Mammary epithelial cell (primary cell): ENCODE measurements at regions of chr1 and their contacts with region 1.

Region 1: GRCh38 chr1:229440851-229441537 is 7.1 kb upstream of the ACTA1 start:
- DNase-seq: peak; percentile 78
- H3K4me3 ChIP-seq: no peak overlapping the region
- H3K27ac ChIP-seq: no peak overlapping the region
- H3K4me1 ChIP-seq: no peaks in the 10 kb centered on the region
- H3K27me3 ChIP-seq: no peaks in the 10 kb centered on the region
- CTCF ChIP-seq: no peak

Region 2: GRCh38 chr1:229363723-229364122 is 77.3 kb before region 1 on chr1:
- CTCF ChIA-PET with region 1: interaction called, 10 read pairs
- dilution Hi-C with region 1: no loop called
- in situ Hi-C with region 1: no loop called
- intact Hi-C with region 1: no loop called
- DNase-seq: no peak
- H3K4me3 ChIP-seq: no peak overlapping the region
- H3K27ac ChIP-seq: no peak overlapping the region
- H3K4me1 ChIP-seq: no peaks in the 10 kb centered on the region
- H3K27me3 ChIP-seq: no peaks in the 10 kb centered on the region
- CTCF ChIP-seq: no peak

Region 3: DNA sequence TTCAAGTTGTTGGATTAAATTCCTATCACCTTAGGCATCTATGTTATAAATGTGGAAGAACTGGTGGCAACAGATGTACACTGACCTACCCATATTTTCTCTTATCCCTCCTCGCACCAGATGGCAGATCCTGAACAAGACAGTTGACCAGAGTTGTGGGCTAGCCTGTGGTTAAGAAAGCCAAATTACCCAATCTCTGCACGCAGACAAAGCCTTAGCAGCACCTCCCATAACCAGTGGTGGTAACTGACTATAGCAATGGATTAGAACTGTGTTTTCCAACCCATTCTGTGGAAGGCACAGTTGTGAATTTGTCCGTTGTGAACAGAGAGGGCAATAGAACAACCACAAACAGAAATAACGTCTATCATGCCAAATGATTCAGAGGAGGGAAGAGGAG is 96.9 kb after region 1 on chr1:
- CTCF ChIA-PET with region 1: no interaction called
- dilution Hi-C with region 1: no loop called
- in situ Hi-C with region 1: no loop called
- intact Hi-C with region 1: no loop called
- DNase-seq: no peak
- H3K4me3 ChIP-seq: no peak overlapping the region
- H3K27ac ChIP-seq: no peak overlapping the region
- H3K4me1 ChIP-seq: no peaks in the 10 kb centered on the region
- H3K27me3 ChIP-seq: no peaks in the 10 kb centered on the region
- CTCF ChIP-seq: no peak

Region 4: DNA sequence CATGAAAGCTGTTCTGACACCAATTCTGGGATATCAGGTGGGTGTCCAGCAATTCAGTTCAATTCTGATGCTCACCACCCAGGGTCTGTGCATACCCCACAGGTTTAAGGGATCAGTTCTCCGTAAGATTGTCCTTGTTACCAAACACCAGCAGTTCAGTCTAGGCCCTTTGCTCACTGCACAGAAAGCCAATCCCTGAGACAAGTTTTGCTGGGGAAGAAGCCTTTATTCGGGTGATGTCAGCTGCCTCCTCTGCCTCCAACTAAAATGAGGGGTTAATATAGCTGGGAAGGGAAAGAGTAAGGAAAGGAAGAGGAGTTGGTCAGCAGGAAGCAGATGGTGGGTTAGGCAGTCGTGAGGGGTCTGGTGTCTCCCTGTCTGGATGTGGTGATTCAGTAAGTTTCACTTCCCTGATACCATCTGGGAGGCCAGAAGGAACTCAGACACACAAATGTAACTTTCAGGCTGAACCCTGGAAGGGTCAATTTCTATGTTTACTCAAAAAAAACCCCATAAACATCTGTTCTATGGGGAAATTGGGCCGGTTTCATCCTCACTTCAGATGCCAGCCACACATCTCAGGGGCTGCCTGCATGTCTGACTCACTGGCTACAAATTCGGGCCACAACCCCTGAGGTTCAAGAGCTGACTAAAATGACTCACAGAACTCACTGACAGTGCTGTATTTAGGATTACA is 1068.4 kb after region 1 on chr1:
- CTCF ChIA-PET with region 1: no interaction called
- dilution Hi-C with region 1: no loop called
- in situ Hi-C with region 1: no loop called
- intact Hi-C with region 1: no loop called
- DNase-seq: peak; percentile 85
- H3K4me3 ChIP-seq: no peak overlapping the region
- H3K27ac ChIP-seq: no peak overlapping the region
- H3K4me1 ChIP-seq: peaks cover 24% of the 10 kb centered on the region
- H3K27me3 ChIP-seq: no peaks in the 10 kb centered on the region
- CTCF ChIP-seq: no peak